ENCODE measurements at regions of chr2 and their contacts with region 1.

Region 1: DNA sequence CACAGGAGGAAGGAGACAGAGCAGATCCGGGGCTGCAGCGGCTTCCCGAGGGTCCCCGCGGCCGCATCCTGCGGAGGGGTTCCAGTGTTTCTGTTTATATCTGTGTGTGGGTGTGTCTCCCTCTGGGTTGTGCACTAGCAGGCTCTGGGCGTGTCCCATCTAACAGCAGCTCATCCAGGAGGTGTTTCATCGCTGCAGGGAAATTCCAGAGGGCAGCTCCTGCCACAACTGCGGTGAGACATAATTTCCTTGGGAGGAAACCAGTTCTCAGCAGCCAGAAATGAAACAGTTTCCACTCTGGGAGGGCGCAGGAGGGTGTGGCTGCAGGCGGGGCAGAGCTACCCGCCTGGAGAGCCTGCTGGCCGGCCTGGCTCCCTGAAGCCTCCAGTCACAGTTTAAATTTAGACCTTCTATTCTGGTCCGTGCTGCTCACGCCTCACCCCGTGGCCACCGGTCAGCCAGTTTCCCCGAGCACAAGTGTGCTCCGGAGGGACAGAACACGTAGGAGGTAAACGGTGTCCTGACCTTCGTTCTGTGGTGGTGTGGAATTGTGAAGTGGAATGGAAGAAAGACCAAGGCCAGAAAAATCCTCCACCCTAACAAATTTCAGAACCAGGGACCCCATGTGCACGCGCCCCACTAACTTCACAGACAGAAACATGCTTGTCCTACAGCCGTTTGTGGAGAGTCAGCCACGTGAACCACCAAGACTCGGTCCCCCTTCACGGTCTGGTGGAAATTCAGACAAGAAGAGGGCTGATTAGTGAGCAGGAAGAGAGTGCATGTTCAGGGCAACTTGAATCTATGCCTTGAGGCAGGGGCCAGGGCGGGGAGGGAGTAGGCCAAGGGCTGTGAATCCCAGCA is 50.2 kb downstream of the TEX44 start:
- DNase-seq: peak; percentile 93

Region 2: DNA sequence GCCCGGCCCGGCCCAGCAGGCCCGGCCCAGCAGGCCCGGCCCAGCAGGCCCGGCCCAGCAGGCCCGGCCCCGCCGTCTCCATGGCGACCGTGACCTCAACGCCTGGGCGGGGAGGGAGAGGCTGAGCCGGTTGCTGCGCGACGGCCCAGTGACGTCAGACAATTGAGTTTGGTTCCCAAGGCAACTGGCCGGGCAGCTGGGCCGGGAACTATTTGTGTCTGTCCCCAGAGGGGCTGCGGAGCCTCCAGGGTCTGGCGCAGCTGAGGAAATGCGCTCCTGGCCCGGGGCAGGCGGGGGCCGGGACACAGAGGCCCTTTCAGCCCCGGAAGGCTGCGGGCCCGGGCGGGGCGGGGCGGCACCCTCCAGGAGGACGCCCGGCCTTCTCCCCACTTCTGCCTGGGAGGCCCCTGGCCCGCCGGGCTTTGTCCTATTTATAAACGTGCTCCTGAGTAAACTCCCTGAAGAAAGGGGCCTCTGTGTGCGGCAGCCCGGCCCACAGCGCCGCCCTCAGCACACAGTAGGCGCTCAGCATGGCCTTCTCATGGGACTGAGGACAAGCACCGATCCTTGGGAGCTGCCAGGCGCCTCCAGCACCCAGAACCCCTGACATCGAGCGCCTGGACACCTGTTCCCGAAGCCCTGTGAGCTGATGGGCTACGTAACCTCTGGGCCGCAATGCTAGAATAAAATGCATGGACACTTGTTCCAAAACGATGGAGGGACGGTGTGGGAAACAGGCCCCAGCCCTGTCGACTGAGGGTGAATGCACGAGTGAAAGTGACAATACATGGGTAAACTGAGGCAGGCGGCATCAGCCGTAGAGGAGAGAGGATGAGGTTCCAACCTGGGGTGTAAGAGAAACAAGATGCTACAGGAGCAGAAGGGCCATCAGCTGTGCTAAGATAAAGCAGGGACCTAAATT is 37.9 kb before region 1 on chr2:
- intact Hi-C with region 1: loop called (anchors 2 kb)
- DNase-seq: peak; percentile 100

Region 3: GRCh38 chr2:231612179-231613053 is 30.4 kb before region 1 on chr2:
- intact Hi-C with region 1: loop called (anchors 1 kb)
- DNase-seq: peak; percentile 94

Region 4: GRCh38 chr2:231662028-231662810 is 19.4 kb after region 1 on chr2:
- intact Hi-C with region 1: loop called (anchors 1 kb)
- DNase-seq: peak; percentile 99

Region 5: GRCh38 chr2:231706731-231707624 is 64.1 kb after region 1 on chr2:
- intact Hi-C with region 1: loop called (anchors 1 kb)
- DNase-seq: peak; percentile 99

Measured in cardiac septum (tissue), 1 donor.